Activated CD4-positive, alpha-beta memory T cell treated with anti-CD3 and anti-CD28 coated beads for 36 hours (primary cell): ENCODE measurements at regions of chr1 and their contacts with region 1.

Region 1: GRCh38 chr1:9671377-9672140 is 20.0 kb downstream of the PIK3CD start:
- DNase-seq: peak; percentile 56
- H3K4me3 Mint-ChIP-seq: peak overlapping the region; percentile 28
- H3K27ac Mint-ChIP-seq: peak overlapping the region; percentile 92
- H3K4me1 Mint-ChIP-seq: peaks cover 58% of the 10 kb centered on the region
- H3K27me3 Mint-ChIP-seq: no peaks in the 10 kb centered on the region

Region 2: GRCh38 chr1:9689011-9689706 is 17.6 kb after region 1 on chr1:
- CTCF ChIA-PET with region 1: interaction called, 4 read pairs
- POLR2A ChIA-PET with region 1: no interaction called
- intact Hi-C with region 1: loop called (anchors 2 kb)
- DNase-seq: peak; percentile 85
- H3K4me3 Mint-ChIP-seq: peak overlapping the region; percentile 64
- H3K27ac Mint-ChIP-seq: no peak overlapping the region
- H3K4me1 Mint-ChIP-seq: peaks cover 70% of the 10 kb centered on the region
- H3K27me3 Mint-ChIP-seq: no peaks in the 10 kb centered on the region

Region 3: GRCh38 chr1:9730096-9730901 is 58.7 kb after region 1 on chr1:
- CTCF ChIA-PET with region 1: no interaction called
- POLR2A ChIA-PET with region 1: no interaction called
- intact Hi-C with region 1: no loop called
- DNase-seq: peak; percentile 43
- H3K4me3 Mint-ChIP-seq: peak overlapping the region; percentile 33
- H3K27ac Mint-ChIP-seq: peak overlapping the region; percentile 58
- H3K4me1 Mint-ChIP-seq: peaks cover 51% of the 10 kb centered on the region
- H3K27me3 Mint-ChIP-seq: no peaks in the 10 kb centered on the region

Region 4: GRCh38 chr1:10209905-10210810 is 538.6 kb after region 1 on chr1 and contains the start of gene KIF1B:
- CTCF ChIA-PET with region 1: no interaction called
- POLR2A ChIA-PET with region 1: no interaction called
- intact Hi-C with region 1: no loop called
- DNase-seq: peak; percentile 97
- H3K4me3 Mint-ChIP-seq: peak within 1 kb of the TSS; percentile 82
- H3K27ac Mint-ChIP-seq: peak within 1 kb of the TSS; percentile 60
- H3K4me1 Mint-ChIP-seq: peaks cover 33% of the 10 kb centered on the region
- H3K27me3 Mint-ChIP-seq: no peaks in the 10 kb centered on the region
- total RNA-seq, gene KIF1B: 16.8 to 17.4 TPM